Activated T-helper 2 cell treated with anti-CD3 and anti-CD28 coated beads, Interferon-gamma antibody, Interleukin-2, Interleukin-4, amounts not matched to agents 10 μg/mL and 5 μg/mL and 100 μg/mL, durations not matched to agents 14 hours and 24 hours and 36 hours (primary cell): ENCODE measurements at regions of chr3 and their contacts with region 1.

Region 1: GRCh38 chr3:15815696-15816095 is 17.9 kb upstream of the ANKRD28 start:
- DNase-seq: no peak
- H3K4me3 Mint-ChIP-seq: no peak overlapping the region
- H3K27ac Mint-ChIP-seq: no peak overlapping the region
- H3K4me1 Mint-ChIP-seq: peaks cover 36% of the 10 kb centered on the region
- H3K27me3 Mint-ChIP-seq: no peaks in the 10 kb centered on the region

Region 2: DNA sequence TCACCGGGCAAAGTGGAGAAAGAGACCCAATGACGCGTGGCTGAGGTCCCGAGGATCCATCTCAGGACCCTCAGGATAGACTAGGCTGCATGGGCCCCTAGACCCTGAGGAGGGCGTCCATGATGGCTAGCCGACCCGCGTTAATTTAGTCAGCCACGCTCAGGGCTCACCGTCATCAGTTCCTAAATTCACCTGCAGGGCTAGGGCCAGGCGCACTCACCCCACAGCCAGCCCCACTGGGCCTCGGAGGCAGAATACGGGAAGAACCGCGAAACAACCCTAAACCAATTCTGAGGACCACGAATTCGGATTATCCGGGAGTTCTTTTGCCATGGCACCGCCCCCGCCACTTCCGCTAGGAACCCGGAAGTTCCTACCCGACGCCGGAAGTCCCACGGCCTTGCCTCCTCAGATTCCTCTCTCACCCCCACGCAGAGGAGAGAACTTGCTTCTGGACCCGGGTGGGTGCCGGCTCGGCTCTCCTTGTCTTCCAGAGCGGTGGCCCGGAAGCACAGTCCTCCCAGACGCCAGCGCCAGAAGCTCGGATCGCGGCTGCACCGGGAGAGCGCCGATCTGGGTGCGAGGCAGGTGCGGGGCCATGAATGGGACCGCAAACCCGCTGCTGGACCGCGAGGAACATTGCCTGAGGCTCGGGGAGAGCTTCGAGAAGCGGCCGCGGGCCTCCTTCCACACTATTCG is 388.4 kb before region 1 on chr3 and contains the starts of genes EAF1 and METTL6:
- intact Hi-C with region 1: loop called (anchors 10 kb)
- DNase-seq: peak; percentile 79
- H3K4me3 Mint-ChIP-seq: peak within 1 kb of the TSS; percentile 95
- H3K27ac Mint-ChIP-seq: peak within 1 kb of the TSS; percentile 89
- H3K4me1 Mint-ChIP-seq: peaks cover 41% of the 10 kb centered on the region
- H3K27me3 Mint-ChIP-seq: no peaks in the 10 kb centered on the region
- total RNA-seq, gene EAF1: 23.9 and 25.9 TPM in 2 replicates
- total RNA-seq, gene METTL6: 16.1 and 16.5 TPM in 2 replicates

Region 3: DNA sequence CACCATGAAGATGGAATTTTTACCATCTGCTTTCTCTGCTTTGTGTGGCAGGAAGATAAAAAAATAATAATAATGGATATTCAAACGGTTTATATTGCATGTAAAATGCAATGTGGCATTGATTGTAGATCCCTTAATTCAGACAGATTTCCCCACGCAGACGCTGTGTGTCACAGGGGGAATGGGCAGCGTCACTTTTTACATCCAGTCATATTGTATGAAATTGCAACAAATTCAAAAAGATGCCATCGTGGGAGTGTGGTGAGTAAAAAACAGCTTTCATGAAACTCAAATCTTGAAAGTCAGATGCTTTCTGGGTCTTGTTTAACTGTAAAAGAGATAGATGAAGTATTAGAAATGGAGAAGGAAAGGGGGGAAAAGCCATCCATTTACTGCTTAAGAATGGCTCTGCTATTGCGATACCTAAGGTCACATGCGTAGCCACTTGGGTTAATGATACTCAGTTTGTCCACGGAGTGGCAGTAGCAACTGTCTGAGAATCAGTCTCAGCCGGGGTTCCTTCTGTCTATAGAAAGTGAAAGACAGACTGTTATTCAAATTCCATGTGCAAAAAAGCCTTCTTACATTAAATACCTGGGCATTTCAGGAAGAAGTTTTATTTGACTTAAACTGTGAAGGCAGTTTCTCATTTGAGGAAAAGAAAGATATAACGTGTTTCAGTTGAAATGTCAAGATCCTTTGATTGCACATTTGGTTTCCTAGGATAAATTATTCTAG is 185.7 kb before region 1 on chr3:
- intact Hi-C with region 1: loop called (anchors 1 kb)
- DNase-seq: peak; percentile 63
- H3K4me3 Mint-ChIP-seq: peak overlapping the region; percentile 6
- H3K27ac Mint-ChIP-seq: peak overlapping the region; percentile 64
- H3K4me1 Mint-ChIP-seq: peaks cover 52% of the 10 kb centered on the region
- H3K27me3 Mint-ChIP-seq: no peaks in the 10 kb centered on the region

Region 4: GRCh38 chr3:15753056-15753710 is 62.5 kb before region 1 on chr3:
- intact Hi-C with region 1: no loop called
- DNase-seq: no peak
- H3K4me3 Mint-ChIP-seq: no peak overlapping the region
- H3K27ac Mint-ChIP-seq: peak overlapping the region; percentile 1
- H3K4me1 Mint-ChIP-seq: peaks cover 24% of the 10 kb centered on the region
- H3K27me3 Mint-ChIP-seq: no peaks in the 10 kb centered on the region

Region 5: DNA sequence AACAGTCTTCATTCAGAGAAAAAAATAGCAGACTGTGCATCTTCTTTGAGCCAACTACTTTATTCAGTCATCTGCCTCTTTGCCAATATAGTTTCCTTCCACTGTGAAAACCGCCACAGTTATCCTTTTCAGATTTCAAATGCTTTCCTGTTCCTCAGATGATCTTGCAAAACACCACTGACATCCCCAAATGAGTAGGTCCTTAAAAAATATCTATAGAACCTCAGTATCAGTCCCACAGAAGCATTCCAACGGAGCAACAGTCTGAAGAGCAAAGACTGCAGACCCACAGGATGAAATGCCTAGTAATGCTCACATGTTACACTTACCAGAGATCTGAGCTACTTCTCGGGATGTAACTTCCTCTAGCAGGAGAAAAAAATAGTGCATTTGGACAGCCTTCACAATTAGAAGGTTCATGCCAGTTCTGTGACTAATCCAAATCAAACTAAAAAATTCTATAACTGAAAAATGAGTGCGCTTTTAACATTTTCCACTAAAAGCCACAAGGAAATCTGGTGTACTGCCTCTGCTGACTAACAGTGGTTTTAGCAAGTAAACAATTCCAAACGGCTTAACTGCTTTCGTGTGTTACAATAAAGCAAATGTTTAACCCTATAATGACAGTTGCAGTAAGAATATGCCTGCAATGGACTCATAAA is 17.9 kb before region 1 on chr3 and contains the start of gene ANKRD28:
- intact Hi-C with region 1: loop called (anchors 2 kb)
- DNase-seq: no peak
- H3K4me3 Mint-ChIP-seq: peak within 1 kb of the TSS; percentile 81
- H3K27ac Mint-ChIP-seq: peak within 1 kb of the TSS; percentile 92
- H3K4me1 Mint-ChIP-seq: peaks cover 77% of the 10 kb centered on the region
- H3K27me3 Mint-ChIP-seq: no peaks in the 10 kb centered on the region
- total RNA-seq, gene ANKRD28: 44.2 and 45.5 TPM in 2 replicates

Region 6: GRCh38 chr3:15845475-15845874 is 29.8 kb after region 1 on chr3:
- intact Hi-C with region 1: no loop called
- DNase-seq: no peak
- H3K4me3 Mint-ChIP-seq: no peak overlapping the region
- H3K27ac Mint-ChIP-seq: peak overlapping the region; percentile 17
- H3K4me1 Mint-ChIP-seq: peaks cover 29% of the 10 kb centered on the region
- H3K27me3 Mint-ChIP-seq: no peaks in the 10 kb centered on the region

Region 7: DNA sequence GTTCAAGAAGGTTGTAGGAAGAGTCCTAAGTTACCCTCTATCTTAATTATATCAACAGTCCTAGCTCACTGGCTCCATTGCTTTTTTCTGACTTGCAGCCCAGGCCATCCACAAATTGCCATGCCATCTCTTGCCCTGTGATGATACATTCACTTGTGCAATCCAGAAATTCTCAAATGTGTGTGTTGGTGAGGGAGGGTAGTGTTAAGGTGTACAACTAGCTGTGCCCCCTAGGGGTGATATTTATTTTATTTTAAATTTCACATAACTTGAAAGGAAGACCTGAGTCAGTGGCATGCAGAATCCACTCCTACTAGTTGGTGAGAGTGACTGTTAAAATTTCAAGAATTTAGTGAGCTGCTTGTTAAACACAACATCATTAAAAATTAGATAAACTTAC is 138.1 kb after region 1 on chr3:
- intact Hi-C with region 1: loop called (anchors 10 kb)
- DNase-seq: no peak
- H3K4me3 Mint-ChIP-seq: no peak overlapping the region
- H3K27ac Mint-ChIP-seq: no peak overlapping the region
- H3K4me1 Mint-ChIP-seq: no peaks in the 10 kb centered on the region
- H3K27me3 Mint-ChIP-seq: peaks cover 5% of the 10 kb centered on the region

Region 8: DNA sequence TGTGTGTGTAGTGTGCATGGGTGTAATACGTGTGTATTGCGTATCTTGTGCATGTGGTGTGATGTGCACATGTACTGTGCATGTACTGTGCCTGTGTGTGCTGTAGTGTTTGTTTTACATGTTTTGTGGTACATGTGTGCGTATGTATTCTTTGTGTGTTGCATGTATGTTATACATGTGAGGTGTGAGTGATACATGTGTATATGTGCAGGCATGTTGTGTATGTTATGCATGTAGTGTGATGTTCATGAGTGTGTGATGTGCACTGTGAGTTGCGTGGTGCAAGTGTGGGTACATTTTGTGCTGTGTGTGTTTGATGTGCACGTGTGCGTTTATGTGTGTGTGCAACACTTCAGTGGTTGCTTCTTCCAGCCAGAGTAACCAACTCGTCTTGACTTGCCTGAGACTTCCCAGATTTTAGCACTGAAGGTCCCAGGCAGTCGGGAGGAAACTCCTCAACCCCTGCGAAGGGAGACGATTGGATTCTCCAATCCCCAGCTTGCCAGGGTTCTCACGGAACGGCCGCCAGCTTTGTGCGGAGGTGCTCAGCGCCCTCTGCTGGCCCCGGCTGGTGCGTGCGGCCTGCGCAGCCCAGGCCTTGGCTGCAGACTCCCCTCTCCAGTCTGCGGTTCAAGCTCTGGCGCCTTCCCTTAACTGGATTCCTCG is 362.4 kb after region 1 on chr3:
- intact Hi-C with region 1: loop called (anchors 5 kb)
- DNase-seq: peak; percentile 45
- H3K4me3 Mint-ChIP-seq: no peak overlapping the region
- H3K27ac Mint-ChIP-seq: no peak overlapping the region
- H3K4me1 Mint-ChIP-seq: peaks cover 3% of the 10 kb centered on the region
- H3K27me3 Mint-ChIP-seq: peaks cover 22% of the 10 kb centered on the region